ENCODE measurements at regions of chr3 and their contacts with region 1.

Region 1: DNA sequence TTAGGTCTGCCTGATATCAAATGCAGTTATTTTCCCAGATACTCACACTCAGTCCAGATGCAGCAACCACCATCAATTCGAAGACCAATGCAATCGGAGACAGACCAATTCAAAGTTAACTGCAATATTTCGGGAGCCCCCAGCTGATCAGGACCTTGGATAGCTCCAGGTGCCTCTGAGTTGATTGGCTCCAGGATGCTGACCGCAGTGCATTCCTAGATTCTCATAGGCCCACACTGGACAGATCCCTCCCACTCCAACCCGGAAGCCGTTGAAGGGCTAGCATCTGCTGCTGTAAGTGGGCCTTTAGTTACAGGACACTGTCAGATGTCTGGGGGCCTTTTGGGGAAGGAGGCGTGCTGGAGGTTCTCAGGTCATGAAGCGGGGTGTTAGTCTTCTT is 89.5 kb upstream of the ATP2B2 start:
- DNase-seq: no peak
- H3K4me3 ChIP-seq: no peak overlapping the region
- CTCF ChIP-seq: no peak
- POLR2A ChIP-seq: no peak

Region 2: GRCh38 chr3:10557781-10558373 is 37.0 kb before region 1 on chr3:
- intact Hi-C with region 1: loop called (anchors 1 kb)
- DNase-seq: peak in 1 of 2 donors; percentile 48
- H3K4me3 ChIP-seq: no peak overlapping the region
- CTCF ChIP-seq: no peak
- POLR2A ChIP-seq: no peak